Ascending aorta (tissue), 2 donors: ENCODE measurements at regions of chr12 and their contacts with region 1.

Region 1: DNA sequence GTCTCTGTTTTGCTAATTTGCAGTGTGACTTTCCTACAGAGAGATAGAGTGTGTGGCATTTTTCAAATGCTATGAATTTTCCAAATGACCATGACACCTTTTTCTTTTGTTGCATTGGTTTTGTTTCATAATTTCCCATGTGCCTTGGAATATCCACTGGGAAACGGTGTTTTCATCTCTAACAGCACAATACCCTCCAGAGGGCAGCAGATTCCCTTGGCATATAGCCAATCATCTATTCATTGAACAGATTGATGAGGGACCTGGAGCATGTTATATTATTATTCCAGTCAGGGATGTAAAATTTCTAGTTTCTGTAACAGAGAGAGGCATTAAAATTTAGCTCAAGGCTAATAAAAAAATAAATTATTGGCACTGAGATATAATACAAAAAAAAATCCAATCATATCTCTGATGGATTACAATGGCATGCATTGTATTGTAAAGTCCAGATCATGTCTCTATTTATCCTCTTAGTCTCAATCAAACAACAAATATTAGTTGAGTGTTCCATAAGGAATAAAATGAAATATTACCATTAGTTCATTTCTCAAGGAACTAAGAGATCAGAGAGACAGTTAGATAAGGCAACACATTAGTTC is 29.6 kb upstream of the NTN4 start:
- DNase-seq: no peak
- H3K4me3 ChIP-seq: no peak overlapping the region
- H3K27ac ChIP-seq: no peak overlapping the region
- H3K4me1 ChIP-seq: no peaks in the 10 kb centered on the region
- H3K27me3 ChIP-seq: no peaks in the 10 kb centered on the region
- CTCF ChIP-seq: peak; percentile 21 to 47 (median 35)

Region 2: DNA sequence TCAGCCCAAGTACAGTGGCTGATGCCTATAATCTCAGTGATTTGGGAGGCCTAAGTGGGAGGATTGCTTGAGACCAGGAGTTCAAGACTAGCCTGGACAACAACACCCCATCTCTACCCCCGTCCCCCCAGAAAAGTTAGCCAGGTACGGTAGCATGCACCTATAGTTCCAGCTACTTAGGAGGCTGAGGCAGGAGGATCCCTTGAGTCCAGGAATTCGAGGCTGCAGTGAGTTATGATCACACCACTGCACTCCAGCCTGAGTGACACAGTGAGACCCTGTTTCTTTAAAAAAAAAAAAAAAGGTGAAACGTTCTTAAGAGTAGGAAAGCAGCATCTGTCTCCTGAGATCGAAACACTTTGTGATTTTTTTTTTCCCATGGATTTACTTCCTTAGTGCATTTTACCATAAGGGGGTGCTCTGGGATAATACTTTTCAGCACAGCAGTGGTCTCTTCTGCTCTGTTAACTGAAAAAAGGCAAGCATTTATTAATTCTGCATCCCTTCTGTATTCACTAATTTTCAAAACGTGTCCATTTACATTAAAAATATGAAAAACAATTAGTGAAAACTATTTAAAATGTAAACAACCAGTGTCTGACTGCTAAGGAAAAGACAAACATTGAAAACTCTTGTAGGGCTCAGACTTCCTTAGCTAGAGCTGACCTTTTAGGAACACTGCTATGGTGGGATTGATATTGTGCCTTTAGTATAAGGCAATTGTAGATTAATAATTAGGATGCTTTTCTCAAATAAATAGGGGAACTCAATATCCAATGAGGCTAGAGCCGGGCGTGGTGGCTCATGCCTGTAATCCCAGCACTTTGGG is 237.8 kb before region 1 on chr12:
- intact Hi-C with region 1: loop called (anchors 1 kb)
- DNase-seq: no peak
- H3K4me3 ChIP-seq: no peak overlapping the region
- H3K27ac ChIP-seq: no peak overlapping the region
- H3K4me1 ChIP-seq: no peaks in the 10 kb centered on the region
- H3K27me3 ChIP-seq: no peaks in the 10 kb centered on the region
- CTCF ChIP-seq: peak in 2 of 3 experiments; percentile 58 to 73

Region 3: GRCh38 chr12:95623585-95624042 is 196.6 kb before region 1 on chr12:
- intact Hi-C with region 1: loop called (anchors 1 kb)
- DNase-seq: peak in 1 of 2 donors; percentile 87
- H3K4me3 ChIP-seq: no peak overlapping the region
- H3K27ac ChIP-seq: no peak overlapping the region
- H3K4me1 ChIP-seq: no peaks in the 10 kb centered on the region
- H3K27me3 ChIP-seq: no peaks in the 10 kb centered on the region
- CTCF ChIP-seq: peak; percentile 38 to 73 (median 70)

Region 4: GRCh38 chr12:95700316-95700785 is 119.9 kb before region 1 on chr12:
- intact Hi-C with region 1: loop called (anchors 2 kb)
- DNase-seq: peak; percentile 13 to 85
- H3K4me3 ChIP-seq: peak overlapping the region in 1 of 2 donors; percentile 26
- H3K27ac ChIP-seq: peak overlapping the region; percentile 70 to 77
- H3K4me1 ChIP-seq: peaks cover 7 to 19% of the 10 kb centered on the region in 2 donors
- H3K27me3 ChIP-seq: no peaks in the 10 kb centered on the region
- CTCF ChIP-seq: no peak

Region 5: DNA sequence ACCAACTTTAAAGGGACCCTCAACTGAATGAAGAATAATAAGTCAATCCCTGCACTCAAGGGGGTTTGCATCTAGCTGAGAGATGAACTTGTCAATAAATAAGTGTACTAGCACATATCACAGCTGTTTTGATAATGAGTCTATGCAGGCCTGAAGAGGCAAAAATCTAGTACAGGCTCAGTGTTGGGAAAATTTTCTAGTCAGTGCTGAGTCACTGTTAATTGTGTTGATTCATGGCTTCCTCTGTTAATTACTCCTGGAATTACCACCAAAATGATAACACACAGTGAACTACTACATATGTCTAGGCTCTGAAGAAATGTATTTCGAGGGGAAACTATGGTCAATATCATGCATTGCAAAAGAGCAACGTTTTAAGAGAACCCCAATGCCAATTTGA is 57.4 kb after region 1 on chr12:
- intact Hi-C with region 1: no loop called
- DNase-seq: no peak
- H3K4me3 ChIP-seq: no peak overlapping the region
- H3K27ac ChIP-seq: no peak overlapping the region
- H3K4me1 ChIP-seq: no peaks in the 10 kb centered on the region
- H3K27me3 ChIP-seq: no peaks in the 10 kb centered on the region
- CTCF ChIP-seq: no peak

Region 6: GRCh38 chr12:95998611-95999286 is 178.5 kb after region 1 on chr12:
- intact Hi-C with region 1: loop called (anchors 5 kb)
- DNase-seq: no peak
- H3K4me3 ChIP-seq: no peak overlapping the region
- H3K27ac ChIP-seq: peak overlapping the region in 1 of 2 donors; percentile 11
- H3K4me1 ChIP-seq: no peaks in the 10 kb centered on the region
- H3K27me3 ChIP-seq: no peaks in the 10 kb centered on the region
- CTCF ChIP-seq: peak; percentile 24 to 76 (median 48)

Region 7: DNA sequence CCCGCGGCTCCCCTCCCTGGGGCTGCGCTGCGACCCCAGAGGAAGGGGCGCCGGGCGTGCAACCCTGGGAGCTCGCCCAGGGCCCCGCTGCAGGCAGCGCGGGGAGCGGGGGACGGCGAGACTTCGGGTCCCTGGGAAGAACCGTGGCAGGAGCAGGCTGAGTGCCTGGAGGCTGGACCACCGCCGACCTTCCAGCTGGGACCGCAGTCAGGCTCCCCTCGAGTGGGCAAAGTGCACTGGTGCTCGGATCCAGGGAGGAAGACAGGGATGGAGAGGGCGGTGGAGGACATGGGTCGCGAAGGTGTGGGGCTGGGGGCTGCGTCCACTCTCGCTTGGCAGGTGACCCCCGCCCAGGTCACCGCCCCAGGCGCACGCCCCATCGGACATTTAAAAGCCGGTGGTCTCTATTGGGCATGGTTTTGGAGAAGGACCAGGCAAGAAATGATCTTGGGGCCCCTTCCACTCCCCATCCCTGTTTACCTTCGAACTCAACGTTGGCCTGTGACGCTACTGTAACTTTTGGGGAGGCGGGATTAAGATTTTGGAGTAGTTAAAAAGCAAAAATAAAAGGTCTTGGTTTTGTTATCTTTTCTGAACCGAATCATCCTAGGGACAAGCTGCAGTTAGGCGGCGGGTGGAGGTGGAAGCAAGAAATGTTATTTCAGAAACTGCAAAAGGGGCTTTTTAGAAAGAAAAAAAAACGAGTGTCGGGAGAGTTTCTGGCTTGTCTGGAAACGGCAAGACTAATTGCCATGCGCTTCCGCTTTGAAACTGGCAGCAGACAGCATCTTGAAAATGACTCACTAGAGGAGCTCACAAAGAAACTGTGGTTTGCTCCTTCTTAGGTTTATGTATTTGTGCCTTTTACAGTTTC is 375.0 kb after region 1 on chr12:
- intact Hi-C with region 1: loop called (anchors 10 kb)
- DNase-seq: peak; percentile 31 to 81
- H3K4me3 ChIP-seq: peak overlapping the region; percentile 85 to 95
- H3K27ac ChIP-seq: peak overlapping the region; percentile 72 to 77
- H3K4me1 ChIP-seq: peaks cover 5 to 22% of the 10 kb centered on the region in 2 donors
- H3K27me3 ChIP-seq: no peaks in the 10 kb centered on the region
- CTCF ChIP-seq: no peak